CD4-positive, alpha-beta T cell (primary cell): ENCODE measurements at regions of chr18 and their contacts with region 1.

Region 1: GRCh38 chr18:22563098-22563707 is 145.5 kb upstream of the CTAGE1 start:
- DNase-seq: peak in 3 of 14 experiments; percentile 48 to 56 (median 48)
- ATAC-seq: no peak
- H3K4me3 ChIP-seq: no peak overlapping the region
- H3K4me3 Mint-ChIP-seq: no peak overlapping the region
- H3K27ac ChIP-seq: no peak overlapping the region
- H3K27ac Mint-ChIP-seq: no peak overlapping the region
- H3K4me1 ChIP-seq: peaks cover 2% of the 10 kb centered on the region
- H3K4me1 Mint-ChIP-seq: peaks cover 4% of the 10 kb centered on the region
- H3K27me3 ChIP-seq: peaks cover 13 to 37% of the 10 kb centered on the region in 2 experiments
- H3K27me3 Mint-ChIP-seq: peaks cover 51% of the 10 kb centered on the region
- CTCF ChIP-seq: no peak

Region 2: GRCh38 chr18:21897811-21898210 is 665.4 kb before region 1 on chr18:
- CTCF ChIA-PET with region 1: no interaction called
- POLR2A ChIA-PET with region 1: no interaction called
- intact Hi-C with region 1: loop called in 1 of 2 experiments (anchors 5 kb)
- DNase-seq: peak in 3 of 14 experiments; percentile 12 to 23 (median 18)
- ATAC-seq: no peak
- H3K4me3 ChIP-seq: no peak overlapping the region
- H3K4me3 Mint-ChIP-seq: no peak overlapping the region
- H3K27ac ChIP-seq: no peak overlapping the region
- H3K27ac Mint-ChIP-seq: no peak overlapping the region
- H3K4me1 ChIP-seq: no peaks in the 10 kb centered on the region
- H3K4me1 Mint-ChIP-seq: no peaks in the 10 kb centered on the region
- H3K27me3 ChIP-seq: peaks cover under 1 to 11% of the 10 kb centered on the region in 2 experiments
- H3K27me3 Mint-ChIP-seq: peaks cover 48% of the 10 kb centered on the region
- CTCF ChIP-seq: peak; percentile 51

Region 3: GRCh38 chr18:21997207-21998143 is 565.7 kb before region 1 on chr18:
- CTCF ChIA-PET with region 1: no interaction called
- POLR2A ChIA-PET with region 1: no interaction called
- intact Hi-C with region 1: loop called in 1 of 2 experiments (anchors 5 kb)
- DNase-seq: peak in 3 of 14 experiments; percentile 38 to 43 (median 41)
- ATAC-seq: no peak
- H3K4me3 ChIP-seq: no peak overlapping the region
- H3K4me3 Mint-ChIP-seq: no peak overlapping the region
- H3K27ac ChIP-seq: no peak overlapping the region
- H3K27ac Mint-ChIP-seq: no peak overlapping the region
- H3K4me1 ChIP-seq: no peaks in the 10 kb centered on the region
- H3K4me1 Mint-ChIP-seq: peaks cover 7% of the 10 kb centered on the region
- H3K27me3 ChIP-seq: no peaks in the 10 kb centered on the region
- H3K27me3 Mint-ChIP-seq: no peaks in the 10 kb centered on the region
- CTCF ChIP-seq: peak; percentile 54

Region 4: GRCh38 chr18:22169007-22169864 is 394.0 kb before region 1 on chr18 and contains the start of gene GATA6:
- CTCF ChIA-PET with region 1: no interaction called
- POLR2A ChIA-PET with region 1: no interaction called
- intact Hi-C with region 1: loop called in 1 of 2 experiments (anchors 5 kb)
- DNase-seq: peak in 5 of 14 experiments; percentile 11 to 63 (median 51)
- ATAC-seq: peak; percentile 57
- H3K4me3 ChIP-seq: peak within 1 kb of the TSS; percentile 51
- H3K4me3 Mint-ChIP-seq: peak within 1 kb of the TSS; percentile 82
- H3K27ac ChIP-seq: no peak within 1 kb of the TSS
- H3K27ac Mint-ChIP-seq: no peak within 1 kb of the TSS
- H3K4me1 ChIP-seq: peaks cover 48% of the 10 kb centered on the region
- H3K4me1 Mint-ChIP-seq: peaks cover 13% of the 10 kb centered on the region
- H3K27me3 ChIP-seq: peaks cover 69 to 91% of the 10 kb centered on the region in 2 experiments
- H3K27me3 Mint-ChIP-seq: peaks cover 80% of the 10 kb centered on the region
- CTCF ChIP-seq: no peak
- total RNA-seq, gene GATA6: 0.08 to 0.14 TPM

Region 5: DNA sequence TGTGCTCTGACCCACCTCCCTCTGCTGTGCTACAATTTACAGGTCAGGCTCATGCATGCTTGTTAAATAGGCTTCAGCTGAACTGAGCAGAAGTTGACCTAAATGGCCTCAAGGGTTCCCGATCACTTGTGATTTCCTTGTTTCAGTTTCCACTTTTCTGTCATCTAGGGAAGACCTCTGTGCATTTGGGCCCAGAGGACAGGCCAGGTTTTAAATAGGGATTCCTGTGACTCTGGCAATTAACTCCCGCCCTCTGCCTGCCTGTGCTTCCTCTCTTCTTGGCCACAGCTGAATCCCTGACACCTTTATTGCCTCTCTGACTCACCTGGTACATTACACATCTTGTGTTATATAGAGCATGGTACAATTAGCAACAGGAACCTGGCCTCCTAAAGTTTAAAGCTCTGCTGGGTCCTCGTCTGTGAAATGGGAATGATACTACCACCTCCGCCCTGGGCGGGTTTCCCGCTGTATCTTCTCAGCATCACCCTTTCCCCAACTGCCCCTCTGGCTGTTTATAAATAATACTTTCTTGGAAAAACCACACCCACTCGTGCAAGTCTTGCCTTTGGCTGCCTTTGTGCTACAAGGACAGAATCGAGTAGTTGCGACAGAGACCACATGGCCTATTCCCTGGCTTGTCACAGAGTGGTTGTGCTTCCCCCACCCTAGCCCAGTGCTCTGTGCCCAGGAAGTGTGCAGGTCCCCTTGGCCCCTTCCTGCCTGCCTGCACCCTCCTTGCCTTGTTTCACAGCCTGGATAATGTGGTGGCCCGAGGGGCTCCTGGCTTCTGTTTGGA is 580.0 kb after region 1 on chr18:
- CTCF ChIA-PET with region 1: no interaction called
- POLR2A ChIA-PET with region 1: no interaction called
- intact Hi-C with region 1: no loop called
- DNase-seq: no peak
- ATAC-seq: no peak
- H3K4me3 ChIP-seq: no peak overlapping the region
- H3K4me3 Mint-ChIP-seq: no peak overlapping the region
- H3K27ac ChIP-seq: no peak overlapping the region
- H3K27ac Mint-ChIP-seq: no peak overlapping the region
- H3K4me1 ChIP-seq: peaks cover 3% of the 10 kb centered on the region
- H3K4me1 Mint-ChIP-seq: no peaks in the 10 kb centered on the region
- H3K27me3 ChIP-seq: peaks cover 0 to 6% of the 10 kb centered on the region in 2 experiments
- H3K27me3 Mint-ChIP-seq: peaks cover 10% of the 10 kb centered on the region
- CTCF ChIP-seq: no peak